ENCODE measurements at regions of chr10 and their contacts with region 1.

Region 1: GRCh38 chr10:5293691-5294550 is 70.8 kb upstream of the UCN3 start:
- DNase-seq: peak; percentile 85 to 97
- H3K4me3 ChIP-seq: no peak overlapping the region
- H3K27ac ChIP-seq: no peak overlapping the region
- H3K4me1 ChIP-seq: no peaks in the 10 kb centered on the region; a peak in 1 of 7 replicates
- H3K27me3 ChIP-seq: no peaks in the 10 kb centered on the region; a peak in 1 of 7 replicates
- CTCF ChIP-seq: peak; percentile 90 to 98 (median 96)
- EP300 ChIP-seq: peak in 1 of 2 experiments; percentile 30; a peak in 1 of 3 replicates
- POLR2A ChIP-seq: no peak
- RAD21 ChIP-seq: peak; percentile 68 to 76

Region 2: GRCh38 chr10:5216801-5217200 is 77.1 kb before region 1 on chr10:
- CTCF ChIA-PET with region 1: no interaction called
- POLR2A ChIA-PET with region 1: no interaction called
- DNase-seq: no peak
- H3K4me3 ChIP-seq: no peak overlapping the region
- H3K27ac ChIP-seq: no peak overlapping the region
- H3K4me1 ChIP-seq: no peaks in the 10 kb centered on the region
- H3K27me3 ChIP-seq: no peaks in the 10 kb centered on the region
- CTCF ChIP-seq: no peak
- EP300 ChIP-seq: no peak
- POLR2A ChIP-seq: no peak
- RAD21 ChIP-seq: no peak

Region 3: GRCh38 chr10:5283305-5284158 is 10.4 kb before region 1 on chr10:
- CTCF ChIA-PET with region 1: interaction called, 21 read pairs
- POLR2A ChIA-PET with region 1: no interaction called
- DNase-seq: peak in 1 of 2 experiments; percentile 72
- H3K4me3 ChIP-seq: no peak overlapping the region
- H3K27ac ChIP-seq: no peak overlapping the region
- H3K4me1 ChIP-seq: peaks cover 0 to 11% (median 1%) of the 10 kb centered on the region in 4 experiments; a peak in 3 of 7 replicates
- H3K27me3 ChIP-seq: no peaks in the 10 kb centered on the region
- CTCF ChIP-seq: peak; percentile 74 to 81 (median 81)
- EP300 ChIP-seq: no peak
- POLR2A ChIP-seq: no peak
- RAD21 ChIP-seq: peak; percentile 75 to 81

Region 4: DNA sequence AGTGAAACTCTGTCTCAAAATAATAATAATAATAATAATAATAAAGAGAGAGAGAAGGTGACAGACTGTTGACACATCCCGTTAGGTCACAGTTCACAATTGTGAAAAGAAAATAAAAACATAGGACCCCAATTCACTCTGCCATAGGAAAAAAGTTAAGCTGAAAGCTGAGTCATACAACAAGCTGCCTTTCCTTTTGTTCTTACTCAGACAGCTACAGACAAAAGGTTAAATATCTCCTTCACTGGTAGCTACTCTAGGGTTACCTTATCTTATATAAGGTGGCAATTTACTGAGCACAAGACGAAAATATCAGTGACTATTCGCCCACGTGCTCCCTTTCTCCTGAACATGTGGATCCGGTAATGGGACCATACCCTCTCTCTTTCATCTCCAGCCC is 93.2 kb after region 1 on chr10:
- CTCF ChIA-PET with region 1: no interaction called
- POLR2A ChIA-PET with region 1: no interaction called
- DNase-seq: no peak
- H3K4me3 ChIP-seq: no peak overlapping the region
- H3K27ac ChIP-seq: no peak overlapping the region
- H3K4me1 ChIP-seq: no peaks in the 10 kb centered on the region; a peak in 1 of 7 replicates
- H3K27me3 ChIP-seq: no peaks in the 10 kb centered on the region
- CTCF ChIP-seq: no peak
- EP300 ChIP-seq: no peak
- POLR2A ChIP-seq: no peak
- RAD21 ChIP-seq: no peak

Measured in H1 (cell line).